SK-N-SH (cell line): ENCODE measurements at regions of chr7 and their contacts with region 1.

Region 1: GRCh38 chr7:132580717-132581285 is 4.5 kb upstream of the PLXNA4 start:
- DNase-seq: peak; percentile 84
- H3K4me3 ChIP-seq: no peak overlapping the region
- H3K27ac ChIP-seq: no peak overlapping the region
- H3K4me1 ChIP-seq: peaks cover 0 to 17% of the 10 kb centered on the region in 2 experiments; a peak in 2 of 4 replicates
- H3K27me3 ChIP-seq: peaks cover 13% of the 10 kb centered on the region; the same call in 1 of the 2 replicates
- CTCF ChIP-seq: peak; percentile 96
- EP300 ChIP-seq: 0 out of 4 replicates have a peak, but pooled peaks of 1 of the 2 experiments have one; percentile 23
- RAD21 ChIP-seq: peak; percentile 98

Region 2: DNA sequence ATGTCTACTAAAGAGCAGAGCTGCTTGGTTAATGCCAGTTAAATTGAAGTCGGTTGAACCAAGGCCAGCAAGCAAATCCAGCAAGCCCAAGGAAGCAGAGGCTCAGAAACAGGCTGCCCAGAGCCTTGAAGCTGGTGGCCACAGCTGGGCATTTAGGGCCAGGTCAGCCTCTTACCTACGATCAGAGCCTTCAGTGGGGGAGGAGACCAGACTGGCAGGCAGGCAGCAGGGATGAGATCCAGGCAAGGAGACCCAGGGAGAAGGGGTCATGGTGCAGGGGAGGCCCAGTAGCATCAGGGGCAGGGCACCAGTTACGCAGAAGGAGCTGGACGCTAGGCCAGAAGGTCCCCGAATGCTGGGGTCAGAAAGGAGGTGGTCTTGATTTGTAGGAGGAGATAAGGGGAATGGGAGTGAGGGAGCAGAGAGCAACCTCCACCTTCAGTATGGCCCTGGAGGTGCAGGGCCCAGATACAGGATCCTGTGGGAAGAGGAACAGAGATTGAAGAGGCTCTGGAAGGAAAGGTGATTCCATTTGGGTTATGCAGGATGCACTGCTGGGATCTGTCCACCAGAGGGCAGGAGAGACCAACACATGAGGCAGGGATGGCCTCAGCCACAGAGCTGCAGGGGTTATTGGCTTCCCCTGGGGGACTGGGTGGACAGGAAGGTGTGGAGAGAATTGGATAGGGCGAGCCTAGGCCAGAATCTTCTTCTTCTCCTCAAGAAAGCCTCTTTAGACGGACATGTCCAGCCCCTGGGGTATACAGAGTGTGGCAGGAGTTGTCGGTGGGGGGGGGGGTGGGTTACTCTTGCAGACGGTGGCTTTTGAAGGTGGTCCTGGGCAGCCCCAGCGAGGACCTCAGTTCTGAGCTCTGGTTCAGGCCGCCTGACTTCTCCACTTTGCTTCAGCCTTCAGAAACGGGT is 891.8 kb before region 1 on chr7:
- CTCF ChIA-PET with region 1: interaction called, 26 read pairs
- POLR2A ChIA-PET with region 1: no interaction called
- DNase-seq: peak; percentile 95
- H3K4me3 ChIP-seq: no peak overlapping the region; a peak in 1 of 4 replicates
- H3K27ac ChIP-seq: no peak overlapping the region
- H3K4me1 ChIP-seq: peaks cover 0 to 4% of the 10 kb centered on the region in 2 experiments; a peak in 1 of 4 replicates
- H3K27me3 ChIP-seq: no peaks in the 10 kb centered on the region
- CTCF ChIP-seq: peak; percentile 99
- EP300 ChIP-seq: no peak
- RAD21 ChIP-seq: peak; percentile 100

Region 3: DNA sequence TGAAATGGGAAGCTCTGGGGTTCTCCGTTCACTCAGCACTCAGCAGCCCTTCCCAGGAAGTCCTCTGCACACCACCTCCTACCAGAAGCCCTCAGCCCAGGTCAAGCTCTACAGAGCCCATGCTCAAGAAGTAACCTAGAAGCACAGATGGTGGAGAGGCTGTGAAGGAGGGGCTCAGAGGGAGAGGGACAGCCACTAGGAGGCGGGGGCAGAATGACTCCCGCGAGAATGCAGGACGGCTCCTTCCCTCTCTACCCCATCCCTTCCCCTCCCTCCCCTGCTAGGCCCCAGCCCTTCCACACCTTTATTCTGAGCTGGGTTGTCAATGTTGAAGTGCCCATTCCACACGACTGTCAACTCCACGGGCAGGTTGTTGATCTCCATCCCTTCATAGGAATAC is 377.8 kb before region 1 on chr7:
- CTCF ChIA-PET with region 1: no interaction called
- POLR2A ChIA-PET with region 1: no interaction called
- DNase-seq: no peak
- H3K4me3 ChIP-seq: no peak overlapping the region
- H3K27ac ChIP-seq: no peak overlapping the region
- H3K4me1 ChIP-seq: peaks cover 0 to 10% of the 10 kb centered on the region in 2 experiments; a peak in 1 of 4 replicates
- H3K27me3 ChIP-seq: no peaks in the 10 kb centered on the region
- CTCF ChIP-seq: no peak
- EP300 ChIP-seq: no peak
- RAD21 ChIP-seq: no peak

Region 4: DNA sequence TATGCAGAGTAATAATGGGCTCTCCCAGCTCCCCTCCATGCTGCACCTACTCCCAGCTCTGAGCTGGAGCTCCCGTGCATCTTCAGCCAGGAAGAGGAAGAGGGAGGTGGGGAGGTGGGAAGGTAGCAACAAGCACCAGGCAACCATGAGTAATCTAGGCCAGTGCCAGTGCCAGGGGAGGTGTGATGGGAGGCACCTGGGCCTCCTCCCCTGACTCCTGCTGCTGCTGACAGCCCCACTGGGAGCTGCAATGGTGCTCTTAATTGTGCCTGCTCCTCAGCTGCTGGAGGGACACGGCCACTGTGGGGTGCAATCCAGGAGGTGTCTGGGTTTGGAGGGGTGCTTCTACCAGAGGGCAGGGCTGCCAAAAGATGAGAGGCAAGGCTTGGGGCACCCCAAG is 247.5 kb before region 1 on chr7:
- CTCF ChIA-PET with region 1: interaction called, 440 read pairs
- POLR2A ChIA-PET with region 1: no interaction called
- DNase-seq: no peak
- H3K4me3 ChIP-seq: no peak overlapping the region
- H3K27ac ChIP-seq: no peak overlapping the region
- H3K4me1 ChIP-seq: peaks cover 0 to 16% of the 10 kb centered on the region in 2 experiments; a peak in 1 of 4 replicates
- H3K27me3 ChIP-seq: no peaks in the 10 kb centered on the region; the same call in 1 of the 2 replicates
- CTCF ChIP-seq: no peak
- EP300 ChIP-seq: no peak
- RAD21 ChIP-seq: no peak

Region 5: DNA sequence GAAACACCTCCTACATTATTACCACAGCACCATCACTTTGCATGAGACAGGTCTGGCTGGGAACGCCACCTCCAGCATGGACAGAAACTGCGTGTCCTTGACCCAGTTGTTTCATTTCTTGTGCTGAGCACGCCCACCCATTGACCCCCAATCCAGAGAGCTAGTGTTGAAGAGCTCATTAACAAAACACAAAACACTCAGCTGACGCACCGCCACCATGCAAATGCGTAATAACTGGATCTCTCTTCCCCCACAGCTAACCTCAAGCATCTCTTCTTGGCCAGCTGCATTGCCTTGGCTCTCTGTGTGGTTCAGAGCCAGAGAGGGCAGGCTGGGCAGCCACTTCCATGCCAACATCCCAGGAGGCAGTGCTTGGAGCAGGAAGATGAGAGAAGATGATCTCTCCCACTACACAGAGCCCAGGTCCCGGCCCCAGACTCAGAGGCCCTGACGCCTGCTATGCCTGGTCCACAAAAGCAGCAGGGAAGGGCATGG is 178.0 kb before region 1 on chr7:
- CTCF ChIA-PET with region 1: interaction called, 121 read pairs
- POLR2A ChIA-PET with region 1: no interaction called
- DNase-seq: no peak
- H3K4me3 ChIP-seq: no peak overlapping the region
- H3K27ac ChIP-seq: no peak overlapping the region
- H3K4me1 ChIP-seq: peaks cover 4 to 35% of the 10 kb centered on the region in 2 experiments; a peak in 3 of 4 replicates
- H3K27me3 ChIP-seq: no peaks in the 10 kb centered on the region; the same call in 1 of the 2 replicates
- CTCF ChIP-seq: no peak
- EP300 ChIP-seq: no peak
- RAD21 ChIP-seq: no peak

Region 6: GRCh38 chr7:132547821-132548220 is 33.0 kb before region 1 on chr7:
- CTCF ChIA-PET with region 1: interaction called, 12 read pairs
- POLR2A ChIA-PET with region 1: no interaction called
- DNase-seq: no peak
- H3K4me3 ChIP-seq: no peak overlapping the region
- H3K27ac ChIP-seq: no peak overlapping the region
- H3K4me1 ChIP-seq: peaks cover 0 to 16% of the 10 kb centered on the region in 2 experiments; a peak in 2 of 4 replicates
- H3K27me3 ChIP-seq: no peaks in the 10 kb centered on the region
- CTCF ChIP-seq: no peak
- EP300 ChIP-seq: no peak
- RAD21 ChIP-seq: no peak

Region 7: DNA sequence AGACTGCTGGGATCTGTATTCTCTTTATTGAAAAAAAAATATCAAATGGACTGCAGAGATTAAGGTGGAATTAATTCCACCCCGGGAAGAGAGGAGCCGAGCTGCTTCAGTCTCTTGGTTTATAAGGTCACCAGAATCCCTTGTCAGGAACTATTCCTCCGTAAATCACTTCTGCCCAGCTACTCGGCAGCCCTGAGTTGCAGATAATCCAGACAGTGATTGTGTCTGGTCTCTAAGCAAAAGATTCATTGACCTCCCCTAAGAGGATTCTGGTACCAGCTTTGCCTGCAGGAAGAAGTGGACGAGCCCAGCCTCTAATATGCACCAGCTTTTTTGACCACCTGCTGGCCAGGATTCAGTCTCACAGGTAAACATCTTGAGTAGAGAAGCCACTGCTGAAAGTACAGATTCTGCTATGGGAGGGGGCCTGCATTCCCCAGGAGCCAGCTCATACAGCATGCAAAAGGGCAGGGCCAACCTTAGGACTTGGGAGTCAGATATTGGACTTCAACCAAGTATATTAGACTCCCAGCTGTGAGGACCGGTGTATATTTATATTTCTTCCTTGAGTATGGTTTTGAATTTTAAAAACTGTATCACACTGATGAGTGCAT is 22.5 kb after region 1 on chr7:
- CTCF ChIA-PET with region 1: interaction called, 13 read pairs
- POLR2A ChIA-PET with region 1: no interaction called
- DNase-seq: no peak
- H3K4me3 ChIP-seq: no peak overlapping the region
- H3K27ac ChIP-seq: no peak overlapping the region
- H3K4me1 ChIP-seq: no peaks in the 10 kb centered on the region
- H3K27me3 ChIP-seq: peaks cover 26% of the 10 kb centered on the region
- CTCF ChIP-seq: no peak
- EP300 ChIP-seq: no peak
- RAD21 ChIP-seq: no peak

Region 8: GRCh38 chr7:132683896-132684686 is 103.3 kb after region 1 on chr7:
- CTCF ChIA-PET with region 1: no interaction called
- POLR2A ChIA-PET with region 1: no interaction called
- DNase-seq: no peak
- H3K4me3 ChIP-seq: no peak overlapping the region
- H3K27ac ChIP-seq: no peak overlapping the region
- H3K4me1 ChIP-seq: peaks cover 0 to 5% of the 10 kb centered on the region in 2 experiments; a peak in 1 of 4 replicates
- H3K27me3 ChIP-seq: peaks cover 5% of the 10 kb centered on the region; the same call in 1 of the 2 replicates
- CTCF ChIP-seq: no peak
- EP300 ChIP-seq: no peak
- RAD21 ChIP-seq: peak; percentile 30; the same call in 1 of the 2 replicates